WTC11 (cell line): ENCODE measurements at regions of chr6 and their contacts with region 1.

Region 1: GRCh38 chr6:26342106-26343004 is 22.6 kb upstream of the BTN3A2 start:
- DNase-seq: peak; percentile 30
- ATAC-seq: peak; percentile 8
- H3K4me3 Mint-ChIP-seq: peak overlapping the region; percentile 91
- H3K27ac Mint-ChIP-seq: no peak overlapping the region
- H3K4me1 Mint-ChIP-seq: peaks cover 13% of the 10 kb centered on the region
- H3K27me3 Mint-ChIP-seq: no peaks in the 10 kb centered on the region; the same call in none of the 2 replicates
- CTCF ChIP-seq: no peak

Region 2: DNA sequence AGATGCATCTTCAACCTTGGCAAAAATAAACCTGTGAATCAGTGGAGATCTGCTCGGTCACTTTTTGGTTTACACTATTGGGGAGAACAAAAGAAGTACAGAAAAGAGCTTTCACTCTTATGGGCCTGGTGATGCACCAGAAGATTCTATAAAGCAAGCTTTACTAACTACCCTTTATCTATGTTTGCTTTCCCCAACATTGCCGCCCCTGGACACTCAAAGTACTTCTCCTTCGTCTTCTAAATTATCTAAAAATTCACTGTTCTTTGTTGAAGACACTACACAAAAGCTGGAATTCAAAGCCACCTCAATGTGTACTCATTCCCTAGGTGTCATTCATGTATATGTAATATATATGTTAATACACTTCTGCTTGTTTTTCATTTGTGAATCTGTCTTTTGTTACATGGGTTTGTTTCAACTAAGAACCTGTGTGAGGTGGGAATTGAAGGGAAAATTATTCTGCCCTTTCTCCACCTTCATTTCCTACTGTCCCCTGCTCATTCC is 75.2 kb before region 1 on chr6:
- CTCF ChIA-PET with region 1: no interaction called
- POLR2A ChIA-PET with region 1: no interaction called
- DNase-seq: no peak
- ATAC-seq: no peak
- H3K4me3 Mint-ChIP-seq: no peak overlapping the region
- H3K27ac Mint-ChIP-seq: peak overlapping the region; percentile 71; the same call in 1 of the 2 replicates
- H3K4me1 Mint-ChIP-seq: peaks cover 34% of the 10 kb centered on the region
- H3K27me3 Mint-ChIP-seq: no peaks in the 10 kb centered on the region; the same call in 1 of the 2 replicates
- CTCF ChIP-seq: no peak

Region 3: GRCh38 chr6:26383624-26384417 is 41.5 kb after region 1 on chr6:
- CTCF ChIA-PET with region 1: interaction called, 13 read pairs
- POLR2A ChIA-PET with region 1: no interaction called
- DNase-seq: peak; percentile 26
- ATAC-seq: peak; percentile 25
- H3K4me3 Mint-ChIP-seq: peak overlapping the region; percentile 98
- H3K27ac Mint-ChIP-seq: peak overlapping the region; percentile 99
- H3K4me1 Mint-ChIP-seq: peaks cover 36% of the 10 kb centered on the region
- H3K27me3 Mint-ChIP-seq: no peaks in the 10 kb centered on the region
- CTCF ChIP-seq: no peak

Region 4: GRCh38 chr6:26450240-26450639 is 107.9 kb after region 1 on chr6:
- CTCF ChIA-PET with region 1: interaction called, 18 read pairs
- POLR2A ChIA-PET with region 1: no interaction called
- DNase-seq: no peak
- ATAC-seq: peak; percentile 52
- H3K4me3 Mint-ChIP-seq: no peak overlapping the region
- H3K27ac Mint-ChIP-seq: no peak overlapping the region
- H3K4me1 Mint-ChIP-seq: no peaks in the 10 kb centered on the region
- H3K27me3 Mint-ChIP-seq: peaks cover 6% of the 10 kb centered on the region
- CTCF ChIP-seq: no peak

Region 5: GRCh38 chr6:26532699-26533531 is 190.6 kb after region 1 on chr6:
- CTCF ChIA-PET with region 1: interaction called, 19 read pairs
- POLR2A ChIA-PET with region 1: interaction called, 7 read pairs
- DNase-seq: peak; percentile 89
- ATAC-seq: peak; percentile 25
- H3K4me3 Mint-ChIP-seq: peak overlapping the region; percentile 98
- H3K27ac Mint-ChIP-seq: peak overlapping the region; percentile 92
- H3K4me1 Mint-ChIP-seq: peaks cover 42% of the 10 kb centered on the region
- H3K27me3 Mint-ChIP-seq: no peaks in the 10 kb centered on the region
- CTCF ChIP-seq: no peak

Region 6: GRCh38 chr6:26568601-26569432 is 226.5 kb after region 1 on chr6:
- CTCF ChIA-PET with region 1: interaction called, 18 read pairs
- POLR2A ChIA-PET with region 1: no interaction called
- DNase-seq: peak; percentile 98
- ATAC-seq: peak; percentile 31
- H3K4me3 Mint-ChIP-seq: peak overlapping the region; percentile 97
- H3K27ac Mint-ChIP-seq: peak overlapping the region; percentile 58
- H3K4me1 Mint-ChIP-seq: peaks cover 9% of the 10 kb centered on the region; the same call in 1 of the 2 replicates
- H3K27me3 Mint-ChIP-seq: peaks cover 4% of the 10 kb centered on the region
- CTCF ChIP-seq: no peak